Motor neuron (in vitro differentiated cells): ENCODE measurements at regions of chr6 and their contacts with region 1.

Region 1: GRCh38 chr6:98039869-98040607 is 757.0 kb upstream of the MMS22L start:
- ATAC-seq: peak in 6 of 8 experiments; percentile 15 to 74 (median 50)
- H3K4me3 ChIP-seq: no peak overlapping the region
- H3K27ac ChIP-seq: no peak overlapping the region
- H3K4me1 ChIP-seq: peaks cover 68 to 75% of the 10 kb centered on the region in 2 donors

Region 2: GRCh38 chr6:97497713-97498331 is 542.2 kb before region 1 on chr6:
- in situ Hi-C with region 1: loop called in 1 of 9 experiments (anchors 25 kb)
- ATAC-seq: peak; percentile 85 to 100 (median 98)
- H3K4me3 ChIP-seq: no peak overlapping the region
- H3K27ac ChIP-seq: no peak overlapping the region
- H3K4me1 ChIP-seq: peaks cover 0 to 3% of the 10 kb centered on the region in 2 donors

Region 3: DNA sequence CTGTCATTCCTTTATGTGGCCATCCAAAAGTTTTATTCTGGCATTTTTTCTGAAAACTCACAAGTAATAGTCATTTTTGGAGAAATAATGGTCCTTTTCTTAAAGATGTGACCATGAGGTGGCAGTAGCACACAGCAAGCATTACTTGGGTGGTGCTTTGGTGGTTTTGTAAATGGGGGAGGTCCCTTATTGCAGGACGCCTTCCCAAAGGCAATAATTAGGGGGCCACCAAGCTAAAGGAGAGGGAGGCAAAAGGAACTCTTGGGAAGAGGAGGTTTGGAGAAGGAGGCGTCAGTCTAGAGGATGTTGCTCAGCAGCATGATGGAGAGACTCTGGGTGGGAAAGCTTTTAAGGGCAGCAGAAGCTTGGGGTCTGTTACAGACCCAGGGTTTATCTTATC is 334.5 kb before region 1 on chr6:
- in situ Hi-C with region 1: loop called in 2 of 9 experiments (anchors 25 kb)
- ATAC-seq: peak in 2 of 8 experiments; percentile 19 to 33
- H3K4me3 ChIP-seq: no peak overlapping the region
- H3K27ac ChIP-seq: no peak overlapping the region
- H3K4me1 ChIP-seq: peaks cover 0 to 7% of the 10 kb centered on the region in 2 donors